Activated CD4-positive, alpha-beta memory T cell treated with anti-CD3 and anti-CD28 coated beads for 36 hours (primary cell): ENCODE measurements at regions of chr19 and their contacts with region 1.

Region 1: DNA sequence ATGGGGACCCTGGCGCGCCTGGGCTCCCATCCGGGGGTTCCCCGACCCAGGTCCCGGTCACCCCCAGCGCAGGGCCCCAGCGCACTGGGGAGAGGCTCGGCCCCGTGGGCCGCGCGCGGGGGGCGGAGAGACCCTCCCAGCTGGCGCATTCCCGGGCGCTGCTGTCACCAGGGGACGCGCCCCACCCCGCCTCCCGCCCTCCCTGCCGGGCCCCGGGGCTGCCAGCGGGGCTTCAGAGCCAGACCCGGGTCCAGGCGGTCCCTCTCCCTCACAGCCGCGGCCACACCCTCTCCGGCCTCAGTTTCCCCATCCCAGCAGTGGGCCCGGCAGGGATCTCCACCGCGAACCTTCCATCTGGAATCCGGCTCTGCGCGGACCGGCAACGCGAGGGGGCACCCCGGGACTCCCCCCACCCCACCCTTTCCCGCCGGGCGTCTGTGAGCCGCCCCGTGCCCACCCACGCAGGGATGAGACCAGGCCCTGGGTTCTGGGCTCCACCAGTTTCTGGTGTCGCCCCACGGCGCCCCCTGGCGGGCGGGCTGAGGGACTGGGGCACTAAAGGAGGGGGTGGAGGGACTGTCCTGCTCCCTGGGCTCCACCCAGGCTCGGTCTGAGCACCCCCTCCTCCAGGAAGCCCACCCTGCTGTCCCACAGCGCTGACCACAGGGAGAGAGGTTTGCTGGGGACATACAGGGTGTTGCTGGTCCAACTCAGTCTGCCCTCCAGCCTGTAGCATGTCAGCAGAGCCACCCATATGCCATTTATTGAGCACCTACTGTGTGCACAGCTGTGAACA is 878 bp upstream of the ADAMTSL5 start:
- DNase-seq: peak; percentile 81
- H3K4me3 Mint-ChIP-seq: peak overlapping the region; percentile 39
- H3K27ac Mint-ChIP-seq: no peak overlapping the region
- H3K4me1 Mint-ChIP-seq: peaks cover 4% of the 10 kb centered on the region
- H3K27me3 Mint-ChIP-seq: peaks cover 3% of the 10 kb centered on the region

Region 2: GRCh38 chr19:1455336-1456120 is 58.2 kb before region 1 on chr19:
- CTCF ChIA-PET with region 1: no interaction called
- POLR2A ChIA-PET with region 1: no interaction called
- intact Hi-C with region 1: no loop called
- DNase-seq: peak; percentile 79
- H3K4me3 Mint-ChIP-seq: no peak overlapping the region
- H3K27ac Mint-ChIP-seq: peak overlapping the region; percentile 8
- H3K4me1 Mint-ChIP-seq: peaks cover 25% of the 10 kb centered on the region
- H3K27me3 Mint-ChIP-seq: peaks cover 54% of the 10 kb centered on the region

Region 3: GRCh38 chr19:1478934-1479707 is 34.6 kb before region 1 on chr19 and contains the start of gene C19orf25:
- CTCF ChIA-PET with region 1: no interaction called
- POLR2A ChIA-PET with region 1: no interaction called
- intact Hi-C with region 1: loop called (anchors 5 kb)
- DNase-seq: peak; percentile 96
- H3K4me3 Mint-ChIP-seq: peak within 1 kb of the TSS; percentile 97
- H3K27ac Mint-ChIP-seq: peak within 1 kb of the TSS; percentile 91
- H3K4me1 Mint-ChIP-seq: peaks cover 9% of the 10 kb centered on the region
- H3K27me3 Mint-ChIP-seq: no peaks in the 10 kb centered on the region
- total RNA-seq, gene C19orf25: 24.4 to 26.9 TPM